ENCODE measurements at regions of chr17 and their contacts with region 1.

Region 1: DNA sequence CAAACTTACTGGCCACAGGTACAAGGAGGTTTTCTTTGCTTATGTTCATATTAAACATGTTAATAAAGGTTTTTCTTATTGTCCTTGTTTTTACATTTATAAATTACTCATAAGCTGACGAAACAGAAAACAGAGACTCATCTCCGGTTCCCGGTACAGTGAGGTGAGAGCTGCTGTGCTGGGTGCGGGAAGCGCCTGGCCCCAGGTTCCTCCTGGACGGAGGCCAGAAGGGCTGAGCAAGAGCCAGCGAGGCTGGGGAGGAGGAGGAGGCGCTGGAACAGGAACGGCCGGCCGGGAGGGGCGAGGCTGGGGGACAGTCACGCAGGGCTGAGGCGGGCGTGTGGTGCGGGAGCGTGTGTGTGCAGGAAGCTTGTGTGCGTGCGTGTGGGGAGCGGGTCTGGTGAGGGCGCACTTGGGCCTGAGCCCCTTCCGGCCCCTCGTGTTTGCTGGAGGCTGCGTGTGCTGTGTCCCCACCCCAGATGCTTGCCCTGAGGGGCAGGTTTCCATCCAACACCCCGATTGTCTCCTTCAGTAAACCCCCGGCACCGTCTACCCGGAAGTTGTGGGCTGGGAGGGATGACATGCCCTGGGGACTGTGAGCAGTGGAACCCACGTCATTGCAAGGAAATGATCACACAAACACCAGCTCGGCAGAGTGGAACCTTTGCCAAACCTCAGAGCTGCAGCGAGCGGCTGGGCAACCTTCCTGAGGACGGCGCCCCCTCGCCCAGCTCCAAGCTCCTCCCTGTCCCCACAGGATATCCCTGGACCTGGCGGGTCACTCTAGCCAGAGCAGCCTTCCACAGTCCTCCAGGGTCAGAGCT is 19.5 kb downstream of the CD7 start:
- DNase-seq: peak; percentile 86 to 98
- ATAC-seq: peak; percentile 67 to 85 (median 79)
- H3K4me3 ChIP-seq: peak overlapping the region; percentile 68
- H3K4me3 Mint-ChIP-seq: peak overlapping the region; percentile 92
- H3K27ac ChIP-seq: peak overlapping the region; percentile 98
- H3K27ac Mint-ChIP-seq: peak overlapping the region; percentile 99
- H3K4me1 ChIP-seq: peaks cover 73% of the 10 kb centered on the region
- H3K4me1 Mint-ChIP-seq: peaks cover 57 to 85% of the 10 kb centered on the region in 2 donors
- H3K27me3 ChIP-seq: no peaks in the 10 kb centered on the region
- H3K27me3 Mint-ChIP-seq: no peaks in the 10 kb centered on the region
- CTCF ChIP-seq: no peak

Region 2: DNA sequence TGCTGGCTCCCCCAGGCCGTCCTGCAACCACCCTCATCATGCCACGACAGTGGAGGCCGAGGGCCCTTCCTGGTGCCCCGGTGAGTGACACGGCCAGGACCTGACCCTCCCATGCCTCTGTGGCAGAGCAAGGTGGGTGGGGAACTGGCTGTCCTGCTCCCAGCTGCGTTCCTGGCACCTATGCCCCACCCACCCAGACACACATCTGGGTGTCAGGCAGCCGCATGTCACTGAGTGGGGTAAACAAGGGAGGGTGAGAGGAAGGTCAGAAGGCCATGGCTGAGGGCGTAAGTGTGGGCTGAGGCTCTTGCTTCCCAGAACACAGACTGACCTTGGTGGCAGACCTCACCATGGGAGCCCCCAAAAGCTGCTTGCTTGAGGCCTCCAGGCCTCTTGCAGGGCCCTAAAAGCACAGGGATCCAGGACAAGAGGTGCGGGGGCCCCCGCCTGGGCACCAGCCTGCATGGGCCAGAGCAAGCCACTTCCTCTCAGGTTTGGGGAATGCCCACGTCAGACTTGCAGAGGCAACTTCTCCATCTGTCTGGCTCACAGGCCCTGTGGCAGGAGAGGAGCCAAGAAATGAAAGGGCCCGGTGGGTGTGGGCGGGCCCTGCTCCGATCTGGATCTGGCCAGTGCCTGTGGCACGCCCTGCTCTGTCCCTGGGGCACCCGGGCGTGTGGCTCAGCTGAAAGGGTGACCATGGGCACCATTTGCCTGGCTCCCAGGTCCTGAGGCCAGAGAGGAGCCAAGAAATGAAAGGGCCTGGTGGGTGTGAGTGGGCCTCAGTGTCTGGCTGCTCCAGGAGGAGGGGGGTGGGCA is 81.4 kb before region 1 on chr17:
- intact Hi-C with region 1: loop called (anchors 5 kb)
- DNase-seq: peak; percentile 69 to 79
- ATAC-seq: peak; percentile 53 to 79 (median 65)
- H3K4me3 ChIP-seq: no peak overlapping the region
- H3K4me3 Mint-ChIP-seq: peak overlapping the region; percentile 72
- H3K27ac ChIP-seq: peak overlapping the region; percentile 94
- H3K27ac Mint-ChIP-seq: peak overlapping the region; percentile 92 to 96
- H3K4me1 ChIP-seq: peaks cover 73% of the 10 kb centered on the region
- H3K4me1 Mint-ChIP-seq: peaks cover 28 to 53% of the 10 kb centered on the region in 2 donors
- H3K27me3 ChIP-seq: no peaks in the 10 kb centered on the region
- H3K27me3 Mint-ChIP-seq: no peaks in the 10 kb centered on the region
- CTCF ChIP-seq: no peak

Region 3: GRCh38 chr17:82257473-82257872 is 40.5 kb before region 1 on chr17:
- intact Hi-C with region 1: loop called (anchors 1 kb)
- DNase-seq: peak; percentile 85 to 89
- ATAC-seq: peak; percentile 96 to 100 (median 97)
- H3K4me3 ChIP-seq: no peak overlapping the region
- H3K4me3 Mint-ChIP-seq: peak overlapping the region; percentile 88
- H3K27ac ChIP-seq: peak overlapping the region; percentile 72
- H3K27ac Mint-ChIP-seq: peak overlapping the region; percentile 100
- H3K4me1 ChIP-seq: peaks cover 12% of the 10 kb centered on the region
- H3K4me1 Mint-ChIP-seq: peaks cover 45 to 63% of the 10 kb centered on the region in 2 donors
- H3K27me3 ChIP-seq: no peaks in the 10 kb centered on the region
- H3K27me3 Mint-ChIP-seq: no peaks in the 10 kb centered on the region
- CTCF ChIP-seq: peak; percentile 16

Region 4: GRCh38 chr17:82315703-82316358 is 17.9 kb after region 1 on chr17:
- intact Hi-C with region 1: loop called (anchors 2 kb)
- DNase-seq: peak in 1 of 2 donors; percentile 78
- ATAC-seq: peak; percentile 30 to 44 (median 40)
- H3K4me3 ChIP-seq: peak overlapping the region; percentile 77
- H3K4me3 Mint-ChIP-seq: peak overlapping the region; percentile 96
- H3K27ac ChIP-seq: peak overlapping the region; percentile 78
- H3K27ac Mint-ChIP-seq: no peak overlapping the region
- H3K4me1 ChIP-seq: peaks cover 54% of the 10 kb centered on the region
- H3K4me1 Mint-ChIP-seq: peaks cover 14 to 35% of the 10 kb centered on the region in 2 donors
- H3K27me3 ChIP-seq: no peaks in the 10 kb centered on the region
- H3K27me3 Mint-ChIP-seq: no peaks in the 10 kb centered on the region
- CTCF ChIP-seq: no peak